Activated CD8-positive, alpha-beta T cell treated with anti-CD3 and anti-CD28 coated beads for 36 hours (primary cell): ENCODE measurements at regions of chr3 and their contacts with region 1.

Region 1: GRCh38 chr3:18740631-18741583 is 315.8 kb upstream of the SATB1 start:
- DNase-seq: peak; percentile 79
- ATAC-seq: peak; percentile 45
- H3K4me3 Mint-ChIP-seq: peak overlapping the region; percentile 58
- H3K27ac Mint-ChIP-seq: peak overlapping the region; percentile 92
- H3K4me1 Mint-ChIP-seq: peaks cover 90% of the 10 kb centered on the region
- H3K27me3 Mint-ChIP-seq: no peaks in the 10 kb centered on the region
- CTCF ChIP-seq: no peak

Region 2: GRCh38 chr3:18424729-18425640 is 315.9 kb before region 1 on chr3 and contains the start of gene SATB1:
- CTCF ChIA-PET with region 1: no interaction called
- POLR2A ChIA-PET with region 1: interaction called, 17 read pairs
- intact Hi-C with region 1: loop called (anchors 5 kb)
- DNase-seq: peak; percentile 78
- ATAC-seq: peak; percentile 17
- H3K4me3 Mint-ChIP-seq: peak within 1 kb of the TSS; percentile 90
- H3K27ac Mint-ChIP-seq: peak within 1 kb of the TSS; percentile 97
- H3K4me1 Mint-ChIP-seq: peaks cover 68% of the 10 kb centered on the region
- H3K27me3 Mint-ChIP-seq: no peaks in the 10 kb centered on the region
- CTCF ChIP-seq: no peak
- total RNA-seq, gene SATB1: 208 to 213 TPM

Region 3: DNA sequence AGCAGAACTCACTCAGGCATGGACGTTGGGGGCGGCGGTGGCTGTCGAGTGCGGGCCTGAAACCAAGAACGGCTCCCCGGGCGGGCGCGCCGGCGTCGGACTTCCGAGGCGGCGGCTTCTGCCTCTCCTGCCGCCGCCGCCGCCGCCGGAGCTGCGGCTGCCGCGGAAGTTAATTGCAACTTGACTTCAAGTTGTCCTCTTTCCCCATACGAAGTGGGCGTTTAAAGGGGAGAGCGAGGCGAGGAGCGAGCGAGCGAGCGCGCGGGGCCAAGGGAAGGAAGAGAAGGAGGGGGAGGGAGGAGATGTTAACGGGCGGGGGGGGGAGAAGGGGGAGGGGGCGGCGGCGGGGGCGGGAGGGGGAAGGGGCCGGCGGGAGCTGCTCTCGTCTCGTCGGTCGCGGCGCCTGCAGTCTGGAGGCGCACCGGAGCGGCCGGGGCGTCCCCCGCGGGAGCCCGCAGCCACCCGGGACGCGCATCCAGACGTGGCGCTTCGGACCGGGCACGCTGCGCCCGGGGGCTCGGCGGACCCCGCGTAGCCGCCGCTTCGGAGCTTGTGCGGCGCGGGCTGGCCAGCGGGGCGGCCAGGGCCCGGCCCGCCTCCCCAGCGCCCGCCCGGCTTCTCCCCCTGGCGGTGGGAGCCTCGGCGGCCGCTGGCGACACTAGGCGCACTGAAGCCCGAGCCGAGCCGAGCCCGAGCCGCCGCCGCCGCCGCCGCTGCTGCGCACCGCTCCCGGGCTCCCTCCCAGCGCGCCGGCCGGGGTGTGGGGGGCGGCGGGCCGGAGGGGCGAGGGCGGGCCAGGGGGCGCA is 296.1 kb before region 1 on chr3:
- CTCF ChIA-PET with region 1: interaction called, 8 read pairs
- POLR2A ChIA-PET with region 1: interaction called, 16 read pairs
- intact Hi-C with region 1: loop called (anchors 2 kb)
- DNase-seq: peak; percentile 83
- ATAC-seq: peak; percentile 75
- H3K4me3 Mint-ChIP-seq: peak overlapping the region; percentile 99
- H3K27ac Mint-ChIP-seq: peak overlapping the region; percentile 97
- H3K4me1 Mint-ChIP-seq: peaks cover 33% of the 10 kb centered on the region
- H3K27me3 Mint-ChIP-seq: no peaks in the 10 kb centered on the region
- CTCF ChIP-seq: no peak

Region 4: DNA sequence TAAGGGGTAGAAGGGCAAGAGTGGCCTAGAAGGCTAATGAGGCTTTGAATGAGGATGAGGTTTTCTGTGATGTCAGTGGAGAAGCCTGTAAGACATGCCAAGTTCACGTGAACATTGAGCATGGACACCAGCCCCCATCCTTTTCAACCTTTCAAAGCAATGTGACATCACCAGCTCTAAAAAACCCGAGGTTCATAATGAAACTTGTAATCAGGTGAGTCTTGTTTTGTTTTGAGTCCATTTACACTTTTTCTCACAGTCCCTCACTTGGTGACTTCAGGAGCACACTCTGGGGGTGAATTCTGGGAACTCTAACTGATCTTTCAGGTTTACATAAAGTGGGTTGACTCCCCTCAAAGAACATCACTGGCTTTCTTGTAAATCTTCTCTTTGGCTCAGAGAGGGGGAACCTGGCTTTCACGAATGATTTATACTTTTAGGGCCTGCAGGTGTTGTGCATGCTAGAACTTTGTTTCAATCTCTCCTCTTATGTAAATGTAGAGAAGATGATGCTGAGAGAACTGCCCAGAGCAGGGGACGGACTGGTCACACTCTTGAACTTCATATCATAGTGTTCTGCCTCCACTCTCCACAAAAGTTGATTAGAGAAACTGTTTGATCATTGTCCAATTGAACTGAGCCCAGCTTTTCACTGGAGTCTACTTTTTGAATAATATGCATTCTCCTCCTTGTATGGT is 91.1 kb before region 1 on chr3:
- CTCF ChIA-PET with region 1: interaction called, 3 read pairs
- POLR2A ChIA-PET with region 1: interaction called, 7 read pairs
- intact Hi-C with region 1: loop called (anchors 2 kb)
- DNase-seq: peak; percentile 82
- ATAC-seq: peak; percentile 88
- H3K4me3 Mint-ChIP-seq: peak overlapping the region; percentile 6
- H3K27ac Mint-ChIP-seq: peak overlapping the region; percentile 94
- H3K4me1 Mint-ChIP-seq: peaks cover 72% of the 10 kb centered on the region
- H3K27me3 Mint-ChIP-seq: no peaks in the 10 kb centered on the region
- CTCF ChIP-seq: no peak

Region 5: GRCh38 chr3:18717598-18717997 is 23.3 kb before region 1 on chr3:
- CTCF ChIA-PET with region 1: interaction called, 69 read pairs
- POLR2A ChIA-PET with region 1: interaction called, 92 read pairs
- intact Hi-C with region 1: loop called (anchors 1 kb)
- DNase-seq: no peak
- ATAC-seq: peak; percentile 54
- H3K4me3 Mint-ChIP-seq: no peak overlapping the region
- H3K27ac Mint-ChIP-seq: peak overlapping the region; percentile 97
- H3K4me1 Mint-ChIP-seq: peaks cover 74% of the 10 kb centered on the region
- H3K27me3 Mint-ChIP-seq: no peaks in the 10 kb centered on the region
- CTCF ChIP-seq: no peak

Region 6: GRCh38 chr3:18758047-18758704 is 17.3 kb after region 1 on chr3:
- CTCF ChIA-PET with region 1: interaction called, 13 read pairs
- POLR2A ChIA-PET with region 1: interaction called, 4 read pairs
- intact Hi-C with region 1: loop called (anchors 2 kb)
- DNase-seq: peak; percentile 41
- ATAC-seq: peak; percentile 96
- H3K4me3 Mint-ChIP-seq: no peak overlapping the region
- H3K27ac Mint-ChIP-seq: peak overlapping the region; percentile 79
- H3K4me1 Mint-ChIP-seq: peaks cover 43% of the 10 kb centered on the region
- H3K27me3 Mint-ChIP-seq: no peaks in the 10 kb centered on the region
- CTCF ChIP-seq: peak; percentile 83

Region 7: DNA sequence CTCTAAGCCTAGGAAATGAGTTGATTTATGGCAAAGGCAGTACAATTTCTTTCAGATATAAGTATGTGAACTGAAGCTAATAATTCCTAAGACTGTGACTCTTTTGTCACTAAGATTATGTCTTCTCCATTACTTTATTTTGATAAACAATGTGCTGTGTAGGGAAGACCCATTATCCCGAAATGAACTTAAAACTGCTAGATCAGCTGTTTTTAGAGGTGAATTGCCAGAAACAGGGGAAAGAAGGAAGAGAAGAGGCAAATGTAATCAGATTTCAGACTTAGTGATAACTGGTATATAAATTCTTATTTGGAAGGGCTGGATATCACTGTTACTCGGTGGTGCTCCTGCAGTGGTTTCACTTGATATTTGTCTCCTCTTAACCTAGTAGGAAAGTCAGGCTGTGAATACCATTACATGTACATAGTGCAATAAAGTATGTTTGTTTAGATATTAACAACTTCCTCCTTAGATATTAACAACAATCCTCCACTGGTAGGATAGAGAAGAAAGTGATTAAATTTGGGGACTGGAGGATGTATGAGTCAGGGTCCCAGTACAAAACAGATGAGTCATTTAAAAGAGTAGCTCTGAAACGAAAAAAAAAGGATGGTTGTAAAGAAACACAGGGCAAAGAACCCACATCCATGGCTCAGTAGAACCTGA is 68.9 kb after region 1 on chr3:
- CTCF ChIA-PET with region 1: no interaction called
- POLR2A ChIA-PET with region 1: no interaction called
- intact Hi-C with region 1: no loop called
- DNase-seq: no peak
- ATAC-seq: peak; percentile 70
- H3K4me3 Mint-ChIP-seq: no peak overlapping the region
- H3K27ac Mint-ChIP-seq: peak overlapping the region; percentile 76
- H3K4me1 Mint-ChIP-seq: peaks cover 29% of the 10 kb centered on the region
- H3K27me3 Mint-ChIP-seq: no peaks in the 10 kb centered on the region
- CTCF ChIP-seq: no peak

Region 8: GRCh38 chr3:18853269-18853668 is 112.4 kb after region 1 on chr3:
- CTCF ChIA-PET with region 1: no interaction called
- POLR2A ChIA-PET with region 1: no interaction called
- intact Hi-C with region 1: no loop called
- DNase-seq: no peak
- ATAC-seq: no peak
- H3K4me3 Mint-ChIP-seq: no peak overlapping the region
- H3K27ac Mint-ChIP-seq: no peak overlapping the region
- H3K4me1 Mint-ChIP-seq: peaks cover 2% of the 10 kb centered on the region
- H3K27me3 Mint-ChIP-seq: no peaks in the 10 kb centered on the region
- CTCF ChIP-seq: no peak

Region 9: DNA sequence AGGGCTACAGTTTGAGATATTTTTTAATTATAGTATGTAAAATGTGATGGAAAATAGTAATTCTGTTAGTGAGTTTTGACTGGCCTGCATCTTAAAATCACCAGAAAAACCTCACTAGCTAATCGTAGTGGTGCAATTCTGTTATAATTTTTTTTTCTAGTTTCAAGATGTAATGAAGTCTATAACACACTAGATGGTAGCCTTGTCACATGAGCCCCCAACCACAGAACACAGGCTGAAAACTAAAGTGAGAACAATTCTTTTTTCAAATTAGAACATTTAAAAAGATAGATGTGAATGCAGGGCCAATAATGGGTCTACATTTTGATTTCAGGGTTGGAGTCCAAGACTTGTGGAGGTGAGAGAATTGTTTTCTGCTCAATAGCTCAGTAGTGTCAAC is 324.1 kb after region 1 on chr3:
- CTCF ChIA-PET with region 1: no interaction called
- POLR2A ChIA-PET with region 1: no interaction called
- intact Hi-C with region 1: no loop called
- DNase-seq: no peak
- ATAC-seq: no peak
- H3K4me3 Mint-ChIP-seq: no peak overlapping the region
- H3K27ac Mint-ChIP-seq: no peak overlapping the region
- H3K4me1 Mint-ChIP-seq: no peaks in the 10 kb centered on the region
- H3K27me3 Mint-ChIP-seq: no peaks in the 10 kb centered on the region
- CTCF ChIP-seq: no peak